GM13976 (cell line): ENCODE measurements at regions of chr4 and their contacts with region 1.

Region 1: DNA sequence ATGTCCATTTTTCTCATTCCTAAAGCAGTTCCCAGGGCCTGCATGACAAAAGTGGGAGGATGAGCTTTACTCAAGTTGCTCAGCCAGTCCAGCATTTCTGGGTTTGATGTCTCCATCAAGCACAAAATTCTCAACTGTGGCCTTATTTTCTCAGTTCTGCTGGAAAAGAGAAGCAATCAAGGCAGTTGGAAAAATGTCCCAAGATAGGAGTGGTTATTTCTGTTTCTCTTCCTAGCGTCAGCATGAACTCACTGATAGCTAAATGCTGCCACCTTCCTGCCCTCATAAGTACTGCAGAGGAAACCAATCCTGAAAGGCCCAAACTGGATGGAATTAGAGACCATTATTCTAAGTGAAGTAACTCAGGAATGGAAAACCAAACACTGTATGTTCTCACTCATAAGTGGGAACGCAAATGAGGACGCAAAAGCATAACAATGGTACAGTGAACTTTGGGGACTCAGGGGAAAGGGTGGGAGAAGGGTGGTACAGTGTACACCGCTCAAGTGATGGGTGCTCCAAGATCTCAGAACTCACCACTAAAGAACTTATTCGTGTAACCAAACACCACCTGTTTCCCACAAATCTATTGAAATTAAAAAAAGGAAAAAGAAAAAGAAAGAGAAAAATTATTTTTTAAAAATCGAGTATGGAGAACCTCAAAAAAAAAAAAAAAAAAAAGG is 29.6 kb downstream of the ADH7 start:
- DNase-seq: no peak
- CTCF ChIP-seq: peak; percentile 82

Region 2: GRCh38 chr4:98995183-98996055 is 410.2 kb before region 1 on chr4 and contains the start of gene METAP1:
- in situ Hi-C with region 1: loop called (anchors 25 kb)
- DNase-seq: peak; percentile 96
- CTCF ChIP-seq: peak; percentile 90

Region 3: DNA sequence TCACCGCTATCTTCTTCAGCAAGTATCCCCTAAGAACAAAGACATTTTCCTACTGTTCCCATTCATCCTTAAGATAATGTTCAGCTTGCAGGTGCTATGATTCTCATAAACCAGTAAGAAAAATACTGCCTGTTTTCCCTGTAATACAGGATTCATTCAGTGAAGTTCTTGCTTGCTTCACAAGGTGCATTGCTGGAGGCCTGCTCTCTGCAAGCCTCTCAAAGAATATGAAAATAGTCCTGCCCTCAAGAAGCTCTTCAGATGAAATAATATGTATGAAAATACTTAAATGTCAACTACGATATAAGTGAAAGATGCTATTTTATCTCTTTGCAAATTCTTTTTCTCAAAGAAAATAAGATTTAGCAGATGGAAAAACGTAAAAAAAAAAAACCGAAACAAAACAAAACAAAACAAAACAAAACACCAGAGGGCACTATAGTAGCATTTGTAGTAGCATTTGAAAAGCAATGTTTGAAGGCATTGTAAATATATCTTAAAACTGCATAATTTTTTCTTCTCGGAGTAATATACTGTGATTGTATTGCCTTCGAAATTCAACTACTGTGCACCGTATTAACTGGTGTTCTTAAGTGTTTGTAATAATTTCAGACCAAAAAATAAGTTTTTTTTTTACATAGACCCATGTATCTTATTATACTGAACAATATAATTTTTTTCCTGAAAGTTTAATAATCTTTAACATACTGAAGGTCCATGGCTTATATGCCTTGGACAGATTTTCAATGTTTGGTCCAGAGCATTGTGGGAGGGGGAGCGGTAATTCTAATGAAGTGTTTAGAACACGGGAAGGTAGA is 287.5 kb before region 1 on chr4:
- in situ Hi-C with region 1: loop called (anchors 25 kb)
- DNase-seq: peak; percentile 32
- CTCF ChIP-seq: peak; percentile 25